CD14-positive monocyte (primary cell): ENCODE measurements at regions of chr5 and their contacts with region 1.

Region 1: GRCh38 chr5:179821581-179822432 is 1.1 kb downstream of the SQSTM1 start:
- DNase-seq: peak; percentile 79 to 90 (median 86)
- H3K4me3 ChIP-seq: peak overlapping the region; percentile 87 to 99 (median 87)
- H3K4me3 Mint-ChIP-seq: peak overlapping the region; percentile 93 to 94
- H3K27ac ChIP-seq: peak overlapping the region; percentile 90 to 98
- H3K27ac Mint-ChIP-seq: peak overlapping the region; percentile 96 to 99 (median 98)
- H3K4me1 ChIP-seq: peaks cover 49 to 68% of the 10 kb centered on the region in 2 donors
- H3K4me1 Mint-ChIP-seq: peaks cover 65% of the 10 kb centered on the region
- H3K27me3 ChIP-seq: no peaks in the 10 kb centered on the region
- H3K27me3 Mint-ChIP-seq: peaks cover 6 to 10% (median 7%) of the 10 kb centered on the region in 3 donors
- CTCF ChIP-seq: no peak

Region 2: DNA sequence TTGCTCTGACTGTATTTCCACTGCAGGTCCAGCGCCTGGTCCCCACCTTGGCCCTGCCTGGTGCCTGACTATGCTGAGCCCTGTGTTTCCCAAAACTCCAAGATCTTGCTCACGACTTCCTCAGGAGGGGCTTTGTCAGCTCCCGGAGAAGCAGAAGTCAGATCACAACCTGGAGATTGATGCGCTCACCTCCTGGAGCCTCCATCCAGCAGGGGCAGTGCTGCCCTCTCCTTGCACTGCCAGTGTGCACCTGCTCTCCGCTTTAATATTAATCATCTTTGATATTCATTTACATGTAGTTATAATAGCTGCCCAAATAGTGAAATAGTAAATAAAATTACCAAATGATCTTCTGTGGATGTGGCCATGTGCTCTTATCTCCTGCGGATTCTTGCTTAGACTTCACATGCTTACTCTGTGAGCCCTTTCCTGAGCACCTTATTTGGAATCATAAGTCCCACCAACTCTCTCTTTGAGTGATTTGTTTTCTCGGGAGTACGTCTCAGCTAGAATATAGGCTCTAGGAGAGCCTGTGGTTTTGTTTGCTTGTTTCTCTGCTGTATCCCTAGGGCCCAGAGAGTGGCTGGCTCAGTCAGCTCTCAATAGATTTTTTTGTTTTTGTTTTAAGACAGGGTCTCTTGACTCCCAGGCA is 71.8 kb before region 1 on chr5:
- intact Hi-C with region 1: no loop called
- DNase-seq: no peak
- H3K4me3 ChIP-seq: no peak overlapping the region
- H3K4me3 Mint-ChIP-seq: no peak overlapping the region
- H3K27ac ChIP-seq: peak overlapping the region in 1 of 2 donors; percentile 53
- H3K27ac Mint-ChIP-seq: peak overlapping the region in 5 of 7 donors; percentile 7 to 84 (median 20)
- H3K4me1 ChIP-seq: peaks cover 24 to 35% of the 10 kb centered on the region in 2 donors
- H3K4me1 Mint-ChIP-seq: peaks cover 40% of the 10 kb centered on the region
- H3K27me3 ChIP-seq: no peaks in the 10 kb centered on the region
- H3K27me3 Mint-ChIP-seq: peaks cover 0 to 3% (median 2%) of the 10 kb centered on the region in 3 donors
- CTCF ChIP-seq: no peak

Region 3: GRCh38 chr5:179763215-179763945 is 58.4 kb before region 1 on chr5:
- intact Hi-C with region 1: no loop called
- DNase-seq: peak; percentile 49 to 61 (median 50)
- H3K4me3 ChIP-seq: no peak overlapping the region
- H3K4me3 Mint-ChIP-seq: peak overlapping the region in 1 of 2 donors; percentile 26
- H3K27ac ChIP-seq: peak overlapping the region in 1 of 2 donors; percentile 60
- H3K27ac Mint-ChIP-seq: peak overlapping the region in 5 of 7 donors; percentile 14 to 68 (median 46)
- H3K4me1 ChIP-seq: peaks cover 94 to 98% of the 10 kb centered on the region in 2 donors
- H3K4me1 Mint-ChIP-seq: peaks cover 95% of the 10 kb centered on the region
- H3K27me3 ChIP-seq: no peaks in the 10 kb centered on the region
- H3K27me3 Mint-ChIP-seq: peaks cover 0 to 6% (median 0%) of the 10 kb centered on the region in 3 donors
- CTCF ChIP-seq: peak; percentile 92

Region 4: GRCh38 chr5:179974946-179975712 is 153.3 kb after region 1 on chr5:
- intact Hi-C with region 1: loop called in 1 of 2 experiments (anchors 10 kb)
- DNase-seq: peak; percentile 10 to 29 (median 21)
- H3K4me3 ChIP-seq: no peak overlapping the region
- H3K4me3 Mint-ChIP-seq: no peak overlapping the region
- H3K27ac ChIP-seq: peak overlapping the region in 1 of 2 donors; percentile 39
- H3K27ac Mint-ChIP-seq: peak overlapping the region; percentile 15 to 78 (median 35)
- H3K4me1 ChIP-seq: peaks cover 25% of the 10 kb centered on the region in 2 donors
- H3K4me1 Mint-ChIP-seq: peaks cover 27% of the 10 kb centered on the region
- H3K27me3 ChIP-seq: no peaks in the 10 kb centered on the region
- H3K27me3 Mint-ChIP-seq: no peaks in the 10 kb centered on the region
- CTCF ChIP-seq: peak; percentile 56